ENCODE measurements at regions of chr4 and their contacts with region 1.

Region 1: DNA sequence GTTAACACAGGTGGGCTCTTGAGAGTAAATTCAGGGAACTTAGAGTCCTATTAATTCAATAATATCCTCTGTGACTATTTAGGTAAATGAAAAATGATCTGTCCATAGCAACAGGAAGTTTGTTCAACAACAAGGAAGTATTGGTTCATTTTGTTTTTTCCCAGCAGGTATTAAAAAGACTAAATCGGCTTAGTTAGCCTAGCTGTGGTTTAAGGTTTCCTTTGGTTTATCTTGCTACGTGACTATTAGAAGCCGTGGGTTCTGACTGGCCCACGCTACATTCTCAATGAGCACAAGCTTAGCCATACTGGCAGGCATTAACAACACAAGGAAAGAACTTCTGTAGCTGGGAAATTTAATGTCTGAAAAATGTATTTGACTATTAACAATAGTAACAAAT is 168.8 kb upstream of the HS3ST1 start:
- DNase-seq: peak; percentile 78
- ATAC-seq: peak; percentile 72
- H3K4me3 ChIP-seq: no peak overlapping the region
- H3K27ac ChIP-seq: peak overlapping the region; percentile 92
- H3K4me1 ChIP-seq: peaks cover 37% of the 10 kb centered on the region
- H3K27me3 ChIP-seq: no peaks in the 10 kb centered on the region
- CTCF ChIP-seq: no peak

Region 2: DNA sequence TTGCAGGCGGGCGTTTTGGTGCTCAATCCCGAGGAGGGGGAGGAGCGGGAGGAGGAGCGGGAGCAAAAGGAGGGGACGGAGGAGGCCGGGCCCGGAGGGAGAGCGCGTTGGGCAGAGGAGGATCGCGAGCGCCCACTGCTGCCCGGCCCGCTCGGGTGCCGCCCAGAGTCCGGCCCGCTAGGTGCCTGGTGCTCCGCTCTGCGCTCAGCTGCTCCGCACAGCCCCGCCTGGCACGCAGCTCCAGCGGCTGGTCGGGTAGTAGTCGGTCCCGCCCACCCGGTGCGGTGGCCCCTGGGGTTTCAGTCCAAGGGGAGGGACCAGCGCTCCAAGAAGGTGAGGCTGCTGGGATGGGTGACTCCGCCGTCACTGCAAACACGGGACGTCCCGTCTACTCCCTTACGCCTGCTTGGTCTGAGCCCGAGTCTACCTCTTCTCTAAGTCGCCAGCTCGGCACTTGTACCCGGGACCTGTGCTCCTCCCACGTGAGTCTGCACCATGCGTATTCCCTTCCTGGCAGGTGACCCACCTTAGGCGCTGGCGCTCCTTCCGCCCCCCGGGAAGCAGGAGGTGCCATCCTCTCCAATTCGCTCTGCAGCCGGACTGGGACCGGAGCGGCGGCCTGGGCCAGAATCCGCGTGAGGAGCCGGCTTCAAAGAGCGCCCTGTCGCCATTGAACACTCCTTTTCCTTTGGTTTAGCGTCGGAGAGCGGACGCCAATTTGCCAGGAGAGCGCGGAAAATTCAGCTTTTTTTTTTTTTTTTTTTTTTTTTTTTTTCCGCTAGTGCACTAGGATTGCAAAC is 168.4 kb before region 1 on chr4:
- CTCF ChIA-PET with region 1: no interaction called
- POLR2A ChIA-PET with region 1: no interaction called
- intact Hi-C with region 1: loop called (anchors 2 kb)
- DNase-seq: peak; percentile 86
- ATAC-seq: peak; percentile 90
- H3K4me3 ChIP-seq: peak overlapping the region; percentile 90
- H3K27ac ChIP-seq: peak overlapping the region; percentile 91
- H3K4me1 ChIP-seq: peaks cover 10% of the 10 kb centered on the region; the same call in 1 of the 2 replicates
- H3K27me3 ChIP-seq: no peaks in the 10 kb centered on the region
- CTCF ChIP-seq: peak; percentile 64

Region 3: DNA sequence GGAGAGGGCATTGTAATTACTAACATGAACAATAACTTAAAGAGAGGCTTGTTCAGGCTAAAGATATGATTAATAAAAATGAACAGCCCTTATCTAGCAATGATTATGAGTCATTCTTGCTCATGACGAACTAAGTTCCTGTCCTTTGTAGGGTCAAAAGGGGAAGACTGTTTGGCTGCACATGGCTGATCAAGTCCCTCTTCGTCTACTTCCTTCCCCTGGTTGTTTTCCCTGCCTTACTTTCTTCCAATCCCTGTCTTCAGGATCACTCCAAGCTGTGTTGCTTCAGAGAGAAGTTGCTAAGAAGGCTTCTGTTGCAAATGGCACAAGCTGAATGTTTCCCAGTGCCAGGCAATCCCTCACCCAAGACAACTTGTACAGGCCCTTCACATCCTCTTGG is 53.8 kb before region 1 on chr4:
- CTCF ChIA-PET with region 1: no interaction called
- POLR2A ChIA-PET with region 1: no interaction called
- intact Hi-C with region 1: loop called (anchors 1 kb)
- DNase-seq: peak; percentile 73
- ATAC-seq: peak; percentile 52
- H3K4me3 ChIP-seq: peak overlapping the region; percentile 25; the same call in 1 of the 2 replicates
- H3K27ac ChIP-seq: peak overlapping the region; percentile 99
- H3K4me1 ChIP-seq: peaks cover 38% of the 10 kb centered on the region
- H3K27me3 ChIP-seq: no peaks in the 10 kb centered on the region
- CTCF ChIP-seq: no peak

Region 4: GRCh38 chr4:11614399-11614798 is 16.9 kb after region 1 on chr4:
- CTCF ChIA-PET with region 1: no interaction called
- POLR2A ChIA-PET with region 1: no interaction called
- intact Hi-C with region 1: loop called (anchors 2 kb)
- DNase-seq: peak; percentile 94
- ATAC-seq: peak; percentile 91
- H3K4me3 ChIP-seq: peak overlapping the region; percentile 30; the same call in 1 of the 2 replicates
- H3K27ac ChIP-seq: peak overlapping the region; percentile 95
- H3K4me1 ChIP-seq: peaks cover 50% of the 10 kb centered on the region
- H3K27me3 ChIP-seq: no peaks in the 10 kb centered on the region
- CTCF ChIP-seq: no peak

Region 5: DNA sequence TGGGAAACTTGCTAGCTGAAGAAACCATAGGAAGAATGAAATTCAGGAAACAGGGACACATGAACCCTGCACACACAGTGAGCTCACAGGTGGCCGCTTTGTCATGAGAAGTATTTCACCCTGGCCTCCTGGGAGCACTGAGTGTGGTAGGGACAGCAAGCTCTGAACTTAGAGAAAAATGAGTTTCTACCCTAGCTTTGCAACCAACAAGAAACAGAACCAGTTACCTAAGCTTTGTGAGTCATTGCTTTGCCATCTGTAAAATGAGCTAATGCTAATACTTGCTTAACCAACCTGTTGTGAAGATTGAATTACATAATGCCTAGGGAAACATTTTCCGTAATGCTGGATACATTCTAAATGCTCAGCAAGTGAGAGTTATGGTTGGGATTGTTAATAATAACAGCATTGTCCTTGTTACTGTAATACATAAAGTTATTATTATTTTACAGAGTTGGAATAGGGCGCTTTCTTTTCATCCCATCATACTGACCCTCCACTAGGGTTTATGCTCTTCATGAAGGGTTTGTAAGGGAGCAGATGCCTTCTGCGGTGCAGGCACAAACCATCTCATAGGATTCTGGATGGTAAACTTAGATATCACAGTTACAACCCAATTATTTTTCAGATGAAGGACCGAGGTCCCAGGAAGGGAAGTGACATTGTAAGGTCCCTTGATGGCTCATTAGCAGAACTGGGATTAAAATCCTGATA is 38.0 kb after region 1 on chr4:
- CTCF ChIA-PET with region 1: no interaction called
- POLR2A ChIA-PET with region 1: no interaction called
- intact Hi-C with region 1: loop called (anchors 5 kb)
- DNase-seq: peak; percentile 89
- ATAC-seq: peak; percentile 65
- H3K4me3 ChIP-seq: no peak overlapping the region
- H3K27ac ChIP-seq: peak overlapping the region; percentile 98
- H3K4me1 ChIP-seq: peaks cover 62% of the 10 kb centered on the region
- H3K27me3 ChIP-seq: no peaks in the 10 kb centered on the region
- CTCF ChIP-seq: no peak

Measured in PC-3 (cell line).